ENCODE measurements at regions of chr5 and their contacts with region 1.

Region 1: GRCh38 chr5:149960272-149961185 is at the start of gene SLC26A2:
- DNase-seq: peak; percentile 93 to 99
- H3K4me3 ChIP-seq: peak within 1 kb of the TSS; percentile 75
- H3K27ac ChIP-seq: peak within 1 kb of the TSS; percentile 80
- H3K4me1 ChIP-seq: peaks cover 13% of the 10 kb centered on the region
- H3K27me3 ChIP-seq: no peaks in the 10 kb centered on the region
- CTCF ChIP-seq: no peak
- total RNA-seq, gene SLC26A2: 10.2 and 13.5 TPM in 2 replicates

Region 2: DNA sequence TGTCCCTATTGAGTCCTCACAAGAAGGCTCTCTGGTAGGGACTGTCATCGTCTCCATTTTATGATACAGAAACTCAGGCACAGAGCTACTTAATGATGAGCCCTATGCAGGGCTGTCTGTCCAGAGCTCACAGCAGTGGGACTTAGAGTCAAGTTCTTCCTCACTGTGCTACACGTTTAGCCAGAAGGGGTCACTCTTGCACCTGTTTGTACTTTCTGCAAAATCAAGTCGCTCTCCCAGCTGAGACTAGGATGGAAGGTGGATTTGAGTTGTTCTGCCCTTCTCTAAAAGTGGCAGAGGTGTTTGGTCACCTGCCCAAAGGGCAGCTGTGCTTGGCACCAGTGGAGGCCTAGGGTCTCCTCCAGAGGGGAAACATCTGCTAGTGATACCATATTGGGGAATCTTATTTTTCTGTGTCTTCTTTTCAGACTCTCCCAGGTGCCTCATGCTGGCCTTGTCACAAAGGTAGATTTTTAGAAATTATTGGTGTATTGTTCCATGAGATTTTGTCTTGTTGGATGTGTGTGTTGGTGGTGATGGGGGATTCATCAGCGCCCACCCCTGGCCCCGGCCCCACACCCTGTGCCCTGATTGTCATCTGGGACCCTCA is 126.2 kb before region 1 on chr5:
- CTCF ChIA-PET with region 1: interaction called, 27 read pairs
- POLR2A ChIA-PET with region 1: interaction called, 13 read pairs
- intact Hi-C with region 1: loop called (anchors 1 kb)
- DNase-seq: peak; percentile 54 to 66
- H3K4me3 ChIP-seq: no peak overlapping the region
- H3K27ac ChIP-seq: no peak overlapping the region
- H3K4me1 ChIP-seq: peaks cover 8% of the 10 kb centered on the region
- H3K27me3 ChIP-seq: no peaks in the 10 kb centered on the region
- CTCF ChIP-seq: peak; percentile 82

Region 3: DNA sequence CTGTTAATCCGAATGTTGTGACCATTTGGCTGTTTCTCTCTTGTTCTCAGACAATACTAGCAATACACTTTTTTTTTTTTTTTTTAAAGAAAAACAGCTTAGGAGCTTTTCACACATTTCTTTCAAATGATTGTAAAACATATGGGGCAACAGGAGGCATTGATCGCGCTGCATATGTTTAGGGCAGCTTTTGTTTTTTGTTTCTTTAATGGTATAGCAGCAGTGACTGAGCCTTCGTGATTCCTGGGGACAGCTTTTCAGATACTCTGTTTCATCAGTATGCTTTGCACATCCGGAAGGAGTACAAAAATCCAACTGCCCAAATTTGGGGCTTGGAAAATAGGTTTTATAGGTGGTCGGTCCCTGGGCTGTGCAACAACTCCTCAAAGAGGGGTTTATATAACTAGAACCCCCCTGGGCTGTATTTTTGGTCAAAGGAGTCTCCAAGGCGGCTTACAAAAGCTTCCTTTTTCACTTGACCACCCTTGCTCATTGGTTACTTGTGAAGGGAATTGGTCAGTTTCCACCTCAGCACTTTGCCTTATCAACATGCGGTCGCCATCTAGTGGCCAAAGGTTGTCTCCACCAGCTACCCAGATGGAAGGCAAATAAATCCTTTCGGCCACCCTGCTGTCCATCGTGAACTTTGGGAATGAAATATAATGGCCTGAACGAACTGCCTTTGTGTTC is 107.7 kb before region 1 on chr5:
- CTCF ChIA-PET with region 1: interaction called, 16 read pairs
- POLR2A ChIA-PET with region 1: interaction called, 19 read pairs
- intact Hi-C with region 1: loop called (anchors 1 kb)
- DNase-seq: peak; percentile 50 to 71
- H3K4me3 ChIP-seq: no peak overlapping the region
- H3K27ac ChIP-seq: no peak overlapping the region
- H3K4me1 ChIP-seq: no peaks in the 10 kb centered on the region
- H3K27me3 ChIP-seq: no peaks in the 10 kb centered on the region
- CTCF ChIP-seq: peak; percentile 89

Region 4: GRCh38 chr5:149887622-149888183 is 72.8 kb before region 1 on chr5:
- CTCF ChIA-PET with region 1: no interaction called
- POLR2A ChIA-PET with region 1: interaction called, 3 read pairs
- intact Hi-C with region 1: loop called (anchors 2 kb)
- DNase-seq: peak; percentile 58 to 68
- H3K4me3 ChIP-seq: no peak overlapping the region
- H3K27ac ChIP-seq: no peak overlapping the region
- H3K4me1 ChIP-seq: peaks cover 3% of the 10 kb centered on the region; the same call in 1 of the 2 replicates
- H3K27me3 ChIP-seq: no peaks in the 10 kb centered on the region
- CTCF ChIP-seq: no peak

Region 5: GRCh38 chr5:149913436-149914419 is 46.8 kb before region 1 on chr5:
- CTCF ChIA-PET with region 1: no interaction called
- POLR2A ChIA-PET with region 1: interaction called, 3 read pairs
- intact Hi-C with region 1: loop called (anchors 1 kb)
- DNase-seq: no peak
- H3K4me3 ChIP-seq: no peak overlapping the region
- H3K27ac ChIP-seq: no peak overlapping the region
- H3K4me1 ChIP-seq: peaks cover 52% of the 10 kb centered on the region
- H3K27me3 ChIP-seq: no peaks in the 10 kb centered on the region
- CTCF ChIP-seq: no peak

Region 6: DNA sequence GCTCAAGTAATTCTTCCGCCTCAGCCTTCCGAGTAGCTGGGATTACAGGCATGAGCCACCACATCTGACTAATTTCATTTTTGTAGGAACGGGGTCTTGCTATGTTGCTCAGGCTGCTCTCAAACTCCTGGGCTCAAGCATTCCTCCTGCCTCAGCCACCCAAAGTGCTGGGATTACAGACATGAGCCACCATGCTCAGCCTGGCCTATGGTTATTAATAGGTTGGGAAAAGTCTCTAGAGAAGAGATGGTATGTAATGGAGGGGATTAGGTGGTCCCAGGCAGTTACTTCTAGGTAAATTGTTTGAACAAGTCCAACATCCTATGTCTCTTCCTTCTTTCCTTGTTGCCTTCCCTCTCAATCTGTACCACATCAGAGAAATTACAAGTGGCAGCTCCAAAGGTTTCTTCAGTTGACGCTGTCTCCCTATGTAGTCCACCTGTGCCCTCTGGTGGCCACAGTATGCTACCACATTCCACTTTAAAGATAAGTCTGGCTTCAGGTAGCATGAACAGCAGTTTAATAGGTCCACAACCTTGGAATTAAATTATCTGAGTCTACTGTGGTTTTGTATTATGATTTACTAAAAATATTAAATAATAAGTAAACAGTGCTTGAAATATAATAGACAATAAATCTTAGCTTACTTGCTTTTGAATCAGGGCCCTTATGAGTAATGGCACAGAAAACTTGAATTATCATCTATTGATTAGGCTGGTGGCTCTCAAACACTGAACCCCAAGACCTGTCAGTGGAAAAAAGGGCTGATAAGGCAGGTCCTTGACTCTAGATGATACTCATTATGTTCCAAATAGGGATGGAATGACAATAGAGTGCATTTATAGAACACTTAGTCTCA is 30.2 kb after region 1 on chr5:
- CTCF ChIA-PET with region 1: interaction called, 6 read pairs
- POLR2A ChIA-PET with region 1: interaction called, 5 read pairs
- intact Hi-C with region 1: loop called (anchors 1 kb)
- DNase-seq: peak; percentile 62 to 70
- H3K4me3 ChIP-seq: no peak overlapping the region
- H3K27ac ChIP-seq: no peak overlapping the region
- H3K4me1 ChIP-seq: peaks cover 15% of the 10 kb centered on the region
- H3K27me3 ChIP-seq: no peaks in the 10 kb centered on the region
- CTCF ChIP-seq: peak; percentile 97

Measured in PC-9 (cell line).